ENCODE measurements at regions of chr1 and their contacts with region 1.

Region 1: DNA sequence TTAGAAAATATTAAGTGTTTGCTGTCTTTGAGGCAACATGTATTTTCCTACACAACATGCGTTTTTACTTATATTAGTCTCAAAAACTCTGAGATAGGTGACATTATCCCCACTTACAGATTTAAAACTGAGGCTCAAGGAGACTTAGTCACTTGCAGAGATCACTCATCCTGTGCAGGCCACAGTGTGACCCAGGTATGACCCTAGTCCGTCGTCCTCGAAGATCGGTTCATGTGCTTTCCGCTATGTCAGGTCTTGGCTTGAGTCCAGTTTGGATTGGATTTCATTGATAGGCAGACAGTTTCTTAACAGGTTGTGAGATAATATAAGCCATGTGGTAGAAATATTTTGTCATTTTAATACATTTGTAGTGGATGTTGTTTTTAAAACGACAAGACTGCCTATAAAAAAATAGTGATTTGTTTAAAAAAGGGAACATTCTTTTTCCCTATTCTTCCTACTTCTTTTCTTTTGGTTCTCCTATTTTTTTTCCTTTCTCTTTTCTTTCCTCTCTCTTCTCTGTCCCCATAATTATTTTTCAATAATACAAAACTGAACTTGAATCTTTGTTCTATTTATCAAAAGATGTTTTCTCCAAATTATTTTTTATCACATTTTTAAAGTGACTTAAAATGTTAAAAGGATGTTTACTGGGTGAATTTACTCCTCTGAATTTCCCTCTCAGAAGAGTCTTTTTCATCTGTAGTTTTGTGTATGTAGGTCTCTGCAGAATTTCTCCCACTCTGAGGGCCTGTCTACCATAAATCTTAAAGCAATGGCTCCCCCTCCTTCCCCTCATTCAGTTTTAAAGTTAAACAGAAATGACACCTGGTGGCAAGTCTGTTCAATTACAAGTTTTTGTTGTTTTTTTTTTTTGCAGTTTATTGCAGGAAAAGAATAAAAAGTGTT is 81.8 kb downstream of the PHTF1 start:
- DNase-seq: no peak
- H3K4me3 ChIP-seq: no peak overlapping the region
- H3K27ac ChIP-seq: no peak overlapping the region
- H3K4me1 ChIP-seq: peaks cover 0 to 8% (median 7%) of the 10 kb centered on the region in 4 donors
- H3K27me3 ChIP-seq: no peaks in the 10 kb centered on the region
- CTCF ChIP-seq: peak; percentile 59 to 61 (median 60)
- EP300 ChIP-seq: no peak
- POLR2A ChIP-seq: no peak

Region 2: DNA sequence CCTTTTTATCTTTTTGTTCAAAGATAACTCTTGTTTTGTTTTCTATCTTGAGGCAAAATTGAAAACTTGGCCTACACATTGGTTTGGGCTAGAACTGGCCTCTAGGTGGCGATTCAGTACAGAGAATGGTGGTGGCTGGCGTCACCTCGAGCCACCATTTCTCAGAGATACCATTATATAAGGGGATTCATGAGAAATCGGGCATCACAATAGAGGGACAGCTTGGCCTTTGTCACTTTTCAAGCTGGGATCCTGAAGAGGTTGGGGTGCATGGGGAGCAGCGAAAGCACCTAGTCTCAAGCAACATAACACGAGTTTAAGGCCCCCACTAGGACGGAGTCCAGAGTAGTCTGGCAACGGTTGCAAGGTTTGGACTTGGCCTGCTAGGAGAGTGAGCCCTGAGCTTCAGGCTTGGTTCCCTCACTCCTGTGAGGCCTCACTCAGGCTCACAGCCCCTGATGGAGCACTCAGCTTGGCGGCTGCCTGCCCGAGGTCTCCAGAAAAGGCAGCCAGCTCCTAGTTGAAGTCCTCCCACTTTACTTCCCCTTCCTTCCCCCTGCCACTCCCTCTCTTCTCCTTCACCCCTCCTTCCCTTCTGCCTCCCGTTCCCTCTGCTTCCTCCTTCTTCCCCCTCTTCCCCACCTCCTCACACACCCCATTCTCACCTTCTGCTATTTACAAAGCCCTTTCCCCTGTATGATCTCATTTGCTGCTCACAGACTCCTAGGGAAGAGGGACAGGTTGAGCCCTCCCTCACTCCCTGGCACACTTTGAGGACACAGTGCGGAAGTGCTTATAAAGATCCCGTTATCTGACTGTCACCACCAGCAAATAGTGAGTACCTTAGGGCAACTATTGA is 536.7 kb before region 1 on chr1:
- intact Hi-C with region 1: loop called (anchors 1 kb)
- DNase-seq: no peak
- H3K4me3 ChIP-seq: peak overlapping the region; percentile 1 to 26 (median 8)
- H3K27ac ChIP-seq: peak overlapping the region in 1 of 4 donors; percentile 32
- H3K4me1 ChIP-seq: peaks cover 8 to 45% (median 40%) of the 10 kb centered on the region in 4 donors
- H3K27me3 ChIP-seq: no peaks in the 10 kb centered on the region
- CTCF ChIP-seq: peak; percentile 69 to 87 (median 82)
- EP300 ChIP-seq: no peak
- POLR2A ChIP-seq: no peak

Region 3: GRCh38 chr1:113542221-113542701 is 135.2 kb before region 1 on chr1:
- intact Hi-C with region 1: no loop called
- DNase-seq: no peak
- H3K4me3 ChIP-seq: no peak overlapping the region
- H3K27ac ChIP-seq: peak overlapping the region; percentile 40 to 65 (median 56)
- H3K4me1 ChIP-seq: peaks cover 0 to 45% (median 14%) of the 10 kb centered on the region in 4 donors
- H3K27me3 ChIP-seq: no peaks in the 10 kb centered on the region
- CTCF ChIP-seq: no peak
- EP300 ChIP-seq: no peak
- POLR2A ChIP-seq: no peak

Region 4: GRCh38 chr1:113630068-113630975 is 47.2 kb before region 1 on chr1:
- intact Hi-C with region 1: no loop called
- DNase-seq: no peak
- H3K4me3 ChIP-seq: no peak overlapping the region
- H3K27ac ChIP-seq: no peak overlapping the region
- H3K4me1 ChIP-seq: no peaks in the 10 kb centered on the region
- H3K27me3 ChIP-seq: no peaks in the 10 kb centered on the region
- CTCF ChIP-seq: no peak
- EP300 ChIP-seq: no peak
- POLR2A ChIP-seq: no peak

Region 5: GRCh38 chr1:113721010-113721409 is 43.5 kb after region 1 on chr1:
- intact Hi-C with region 1: no loop called
- DNase-seq: no peak
- H3K4me3 ChIP-seq: no peak overlapping the region
- H3K27ac ChIP-seq: no peak overlapping the region
- H3K4me1 ChIP-seq: no peaks in the 10 kb centered on the region
- H3K27me3 ChIP-seq: no peaks in the 10 kb centered on the region
- CTCF ChIP-seq: no peak
- EP300 ChIP-seq: no peak
- POLR2A ChIP-seq: no peak

Region 6: DNA sequence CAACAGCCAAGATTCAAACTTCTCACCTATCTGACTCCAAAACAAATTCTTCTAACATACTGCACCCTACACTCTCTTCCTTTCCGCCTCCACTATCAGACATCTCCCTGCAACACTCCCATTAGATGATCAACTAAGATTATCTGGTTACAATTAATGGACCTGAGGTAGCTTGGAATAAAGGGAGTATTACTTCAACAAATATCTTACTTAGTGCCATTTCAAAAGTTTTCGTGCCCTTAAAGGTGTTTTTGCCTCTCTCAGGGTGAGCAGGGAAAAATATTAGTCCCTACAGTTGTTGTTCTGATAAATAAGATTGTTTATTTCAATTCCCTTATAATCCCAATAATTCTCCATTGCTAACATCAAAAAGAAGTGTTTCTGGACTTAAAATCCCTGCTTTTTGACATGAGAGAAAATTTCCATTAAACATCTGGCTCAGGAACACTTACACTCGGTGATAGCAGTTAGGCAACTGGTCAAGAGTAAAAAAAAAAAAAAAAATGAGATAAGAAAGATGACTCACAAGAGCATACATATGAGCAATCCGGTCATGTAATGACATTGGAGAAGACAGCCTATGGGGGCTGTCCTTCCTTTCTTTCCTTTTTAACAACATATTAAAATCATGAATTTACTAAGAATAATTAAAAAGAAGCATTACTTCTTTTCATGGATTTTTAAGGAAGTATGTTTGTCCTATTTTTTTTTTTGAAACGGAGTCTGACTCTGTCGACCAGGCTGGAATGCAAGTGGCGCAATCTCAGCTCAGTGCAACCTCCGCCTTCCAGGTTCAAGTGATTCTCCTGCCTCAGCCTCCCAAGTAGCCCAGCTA is 127.1 kb after region 1 on chr1:
- intact Hi-C with region 1: no loop called
- DNase-seq: no peak
- H3K4me3 ChIP-seq: no peak overlapping the region
- H3K27ac ChIP-seq: no peak overlapping the region
- H3K4me1 ChIP-seq: peaks cover 38 to 82% (median 76%) of the 10 kb centered on the region in 4 donors
- H3K27me3 ChIP-seq: no peaks in the 10 kb centered on the region
- CTCF ChIP-seq: no peak
- EP300 ChIP-seq: no peak
- POLR2A ChIP-seq: no peak

Measured in esophagus muscularis mucosa (tissue), 4 donors.